IMR-90 (cell line): ENCODE measurements at regions of chr22 and their contacts with region 1.

Region 1: GRCh38 chr22:22207845-22208564 is 36.6 kb upstream of the VPREB1 start:
- DNase-seq: peak; percentile 70
- ATAC-seq: peak; percentile 97
- H3K4me3 ChIP-seq: no peak overlapping the region
- H3K27ac ChIP-seq: no peak overlapping the region
- H3K4me1 ChIP-seq: no peaks in the 10 kb centered on the region
- H3K27me3 ChIP-seq: peaks cover 23% of the 10 kb centered on the region
- CTCF ChIP-seq: peak; percentile 79
- POLR2A ChIP-seq: no peak
- RAD21 ChIP-seq: peak; percentile 86

Region 2: DNA sequence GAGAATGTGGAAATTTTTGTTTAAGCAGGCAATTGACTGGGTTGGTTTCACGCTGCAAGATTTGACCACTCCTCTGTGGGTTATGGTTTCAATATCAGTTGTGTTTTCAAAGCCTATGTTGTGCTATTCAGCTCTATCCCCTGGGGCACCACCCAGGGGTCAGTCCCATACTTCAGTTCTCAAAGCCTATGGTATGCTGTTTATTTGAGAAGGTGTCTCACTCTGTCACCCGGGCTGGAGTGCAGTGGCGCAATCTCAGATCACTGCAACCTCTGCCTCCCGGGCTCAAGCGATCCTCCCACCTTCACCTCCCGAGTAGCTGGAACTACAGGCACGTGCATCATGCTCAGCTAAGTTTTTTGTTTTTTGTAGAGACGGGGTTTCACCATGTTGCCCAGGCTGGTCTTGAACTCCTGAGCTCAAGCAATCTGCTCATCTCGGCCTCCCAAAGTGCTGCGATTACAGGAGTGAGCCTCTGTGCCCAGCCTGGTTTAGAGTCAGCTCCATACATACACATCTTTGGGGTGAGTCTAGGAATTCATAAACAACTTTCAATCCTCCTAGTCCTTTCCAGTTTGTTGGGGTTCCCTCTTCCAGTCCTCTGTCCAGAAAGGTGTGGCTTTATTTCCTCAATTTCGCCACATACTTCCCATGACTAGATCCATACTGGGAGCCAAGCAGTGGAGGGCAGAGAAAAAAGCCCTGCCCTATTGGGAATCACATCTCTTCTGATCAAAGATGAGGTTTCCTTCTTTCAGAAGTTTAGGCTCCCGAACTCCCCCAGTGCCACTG is 305.5 kb before region 1 on chr22:
- CTCF ChIA-PET with region 1: no interaction called
- POLR2A ChIA-PET with region 1: no interaction called
- dilution Hi-C with region 1: no loop called
- in situ Hi-C with region 1: no loop called
- intact Hi-C with region 1: no loop called
- DNase-seq: no peak
- ATAC-seq: no peak
- H3K4me3 ChIP-seq: no peak overlapping the region
- H3K27ac ChIP-seq: no peak overlapping the region
- H3K4me1 ChIP-seq: no peaks in the 10 kb centered on the region
- H3K27me3 ChIP-seq: no peaks in the 10 kb centered on the region
- CTCF ChIP-seq: no peak
- POLR2A ChIP-seq: no peak
- RAD21 ChIP-seq: no peak

Region 3: GRCh38 chr22:21917181-21917958 is 290.6 kb before region 1 on chr22:
- CTCF ChIA-PET with region 1: no interaction called
- POLR2A ChIA-PET with region 1: no interaction called
- dilution Hi-C with region 1: no loop called
- in situ Hi-C with region 1: no loop called
- intact Hi-C with region 1: no loop called
- DNase-seq: no peak
- ATAC-seq: peak; percentile 42; the same call in 1 of the 2 replicates
- H3K4me3 ChIP-seq: no peak overlapping the region
- H3K27ac ChIP-seq: no peak overlapping the region
- H3K4me1 ChIP-seq: peaks cover 10% of the 10 kb centered on the region
- H3K27me3 ChIP-seq: no peaks in the 10 kb centered on the region
- CTCF ChIP-seq: no peak
- POLR2A ChIP-seq: no peak
- RAD21 ChIP-seq: no peak

Region 4: GRCh38 chr22:22030493-22031182 is 177.4 kb before region 1 on chr22:
- CTCF ChIA-PET with region 1: interaction called, 3 read pairs
- POLR2A ChIA-PET with region 1: no interaction called
- dilution Hi-C with region 1: no loop called
- in situ Hi-C with region 1: no loop called
- intact Hi-C with region 1: loop called (anchors 1 kb)
- DNase-seq: peak; percentile 50
- ATAC-seq: peak; percentile 96
- H3K4me3 ChIP-seq: no peak overlapping the region
- H3K27ac ChIP-seq: no peak overlapping the region
- H3K4me1 ChIP-seq: no peaks in the 10 kb centered on the region; the same call in 1 of the 2 replicates
- H3K27me3 ChIP-seq: no peaks in the 10 kb centered on the region; the same call in 1 of the 2 replicates
- CTCF ChIP-seq: peak; percentile 67
- POLR2A ChIP-seq: no peak
- RAD21 ChIP-seq: peak; percentile 76

Region 5: DNA sequence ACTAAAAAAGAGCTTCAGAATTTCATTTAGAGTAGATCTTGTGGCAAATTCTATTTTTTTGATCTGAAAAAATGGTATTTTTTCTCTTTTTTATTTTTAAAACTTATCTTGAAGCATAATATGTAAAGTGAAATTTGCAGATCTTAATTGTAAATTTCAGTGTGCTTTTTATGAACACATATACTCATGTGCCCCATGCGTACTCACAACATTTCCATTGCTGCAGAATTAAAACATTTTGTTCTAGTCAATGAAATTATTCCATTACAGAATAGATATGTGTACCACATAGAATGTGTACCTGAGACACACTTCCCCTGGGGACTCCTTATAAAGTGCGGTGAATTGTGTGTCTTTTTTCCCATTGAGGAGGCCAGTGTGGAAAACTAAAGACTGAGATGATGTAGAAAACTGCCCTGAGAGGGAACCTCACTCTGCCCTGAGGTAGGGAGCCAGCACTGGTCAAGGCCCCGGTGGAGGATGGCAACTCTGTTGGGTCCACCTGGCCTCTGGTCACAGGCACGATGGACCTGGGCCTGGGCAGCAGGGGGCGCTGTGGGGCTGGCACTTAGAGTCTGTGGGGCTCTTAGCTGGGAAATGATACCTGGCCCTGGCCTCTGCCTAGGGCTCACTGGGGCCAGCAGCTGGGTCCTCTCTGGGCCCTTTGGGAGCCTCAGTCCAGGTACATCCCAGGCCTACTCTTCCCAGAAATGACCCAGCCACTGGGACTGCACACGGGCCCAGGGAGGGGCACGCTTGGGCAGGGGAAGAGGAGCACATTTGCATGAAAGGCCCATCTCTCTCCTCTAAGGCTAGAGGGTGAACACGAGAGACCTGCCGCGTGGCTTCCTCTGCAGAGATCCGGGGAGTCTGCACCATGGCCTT is 147.6 kb before region 1 on chr22:
- CTCF ChIA-PET with region 1: interaction called, 3 read pairs
- POLR2A ChIA-PET with region 1: no interaction called
- dilution Hi-C with region 1: no loop called
- in situ Hi-C with region 1: no loop called
- intact Hi-C with region 1: loop called (anchors 5 kb)
- DNase-seq: peak; percentile 24
- ATAC-seq: peak; percentile 92
- H3K4me3 ChIP-seq: no peak overlapping the region
- H3K27ac ChIP-seq: no peak overlapping the region
- H3K4me1 ChIP-seq: no peaks in the 10 kb centered on the region; the same call in 1 of the 2 replicates
- H3K27me3 ChIP-seq: peaks cover 33% of the 10 kb centered on the region
- CTCF ChIP-seq: peak; percentile 78
- POLR2A ChIP-seq: no peak
- RAD21 ChIP-seq: peak; percentile 65

Region 6: GRCh38 chr22:22327723-22328122 is 119.7 kb after region 1 on chr22:
- CTCF ChIA-PET with region 1: no interaction called
- POLR2A ChIA-PET with region 1: no interaction called
- dilution Hi-C with region 1: no loop called
- in situ Hi-C with region 1: no loop called
- intact Hi-C with region 1: loop called (anchors 10 kb)
- DNase-seq: no peak
- ATAC-seq: no peak
- H3K4me3 ChIP-seq: no peak overlapping the region
- H3K27ac ChIP-seq: no peak overlapping the region
- H3K4me1 ChIP-seq: no peaks in the 10 kb centered on the region
- H3K27me3 ChIP-seq: peaks cover 5% of the 10 kb centered on the region
- CTCF ChIP-seq: no peak
- POLR2A ChIP-seq: no peak
- RAD21 ChIP-seq: no peak

Region 7: GRCh38 chr22:22422629-22423112 is 214.7 kb after region 1 on chr22:
- CTCF ChIA-PET with region 1: interaction called, 4 read pairs
- POLR2A ChIA-PET with region 1: no interaction called
- dilution Hi-C with region 1: no loop called
- in situ Hi-C with region 1: no loop called
- intact Hi-C with region 1: loop called (anchors 2 kb)
- DNase-seq: peak; percentile 48
- ATAC-seq: peak; percentile 81
- H3K4me3 ChIP-seq: no peak overlapping the region
- H3K27ac ChIP-seq: no peak overlapping the region
- H3K4me1 ChIP-seq: no peaks in the 10 kb centered on the region
- H3K27me3 ChIP-seq: peaks cover 18% of the 10 kb centered on the region
- CTCF ChIP-seq: peak; percentile 60
- POLR2A ChIP-seq: no peak
- RAD21 ChIP-seq: no peak